ENCODE measurements at regions of chr7 and their contacts with region 1.

Region 1: GRCh38 chr7:106257752-106258151 is 27.0 kb downstream of the NAMPT start:
- DNase-seq: no peak
- H3K4me3 Mint-ChIP-seq: no peak overlapping the region
- H3K27ac Mint-ChIP-seq: peak overlapping the region; percentile 25
- H3K4me1 Mint-ChIP-seq: peaks cover 63% of the 10 kb centered on the region
- H3K27me3 Mint-ChIP-seq: no peaks in the 10 kb centered on the region

Region 2: GRCh38 chr7:106279425-106280197 is 21.9 kb after region 1 on chr7:
- intact Hi-C with region 1: loop called (anchors 2 kb)
- DNase-seq: no peak
- H3K4me3 Mint-ChIP-seq: peak overlapping the region; percentile 78
- H3K27ac Mint-ChIP-seq: peak overlapping the region; percentile 92
- H3K4me1 Mint-ChIP-seq: peaks cover 60% of the 10 kb centered on the region
- H3K27me3 Mint-ChIP-seq: no peaks in the 10 kb centered on the region

Region 3: GRCh38 chr7:106332201-106332600 is 74.4 kb after region 1 on chr7:
- intact Hi-C with region 1: no loop called
- DNase-seq: no peak
- H3K4me3 Mint-ChIP-seq: no peak overlapping the region
- H3K27ac Mint-ChIP-seq: no peak overlapping the region
- H3K4me1 Mint-ChIP-seq: peaks cover 21% of the 10 kb centered on the region
- H3K27me3 Mint-ChIP-seq: no peaks in the 10 kb centered on the region

Region 4: GRCh38 chr7:106367018-106367420 is 109.3 kb after region 1 on chr7:
- intact Hi-C with region 1: no loop called
- DNase-seq: no peak
- H3K4me3 Mint-ChIP-seq: no peak overlapping the region
- H3K27ac Mint-ChIP-seq: peak overlapping the region; percentile 38
- H3K4me1 Mint-ChIP-seq: peaks cover 26% of the 10 kb centered on the region
- H3K27me3 Mint-ChIP-seq: peaks cover 18% of the 10 kb centered on the region

Region 5: DNA sequence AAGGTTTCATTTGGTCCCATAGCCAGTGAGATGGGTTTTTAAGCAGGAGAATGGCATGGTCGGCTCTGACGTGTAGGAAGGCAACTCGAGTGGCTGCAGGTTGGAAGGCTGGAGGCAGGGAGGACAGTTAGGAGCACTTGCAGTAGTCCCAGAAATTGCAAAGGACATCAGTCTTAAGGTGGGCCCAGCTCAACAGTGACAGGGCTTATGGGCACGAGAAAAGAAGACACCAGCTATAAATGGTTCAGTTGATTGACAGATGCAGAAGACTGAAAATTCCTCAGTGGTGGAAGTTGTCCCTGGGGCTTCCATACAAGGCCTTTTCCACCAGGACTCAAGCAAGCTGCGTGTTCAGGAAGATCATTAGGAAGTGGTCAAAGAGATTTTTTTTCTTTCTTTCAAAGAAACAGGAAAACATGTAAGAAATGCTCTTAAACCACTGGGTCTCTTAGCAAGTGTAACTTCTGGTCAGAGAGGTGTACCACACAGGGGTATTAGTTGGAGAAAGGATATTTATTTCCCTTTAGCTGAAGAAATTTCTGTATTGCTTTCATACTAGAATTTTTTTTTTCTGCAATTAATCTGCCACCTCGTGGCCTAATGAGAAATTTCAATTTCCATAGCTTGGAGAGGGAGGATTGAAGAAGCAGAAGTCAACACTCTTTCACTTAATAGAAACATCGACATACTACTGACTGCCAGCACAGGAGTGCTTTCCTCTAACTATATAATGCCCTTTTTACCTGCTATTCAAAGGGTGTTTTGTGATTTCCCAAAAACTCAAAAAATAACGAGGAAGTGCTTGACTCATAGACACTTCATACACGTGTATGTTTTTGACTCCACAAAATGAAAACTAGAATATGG is 204.5 kb after region 1 on chr7:
- intact Hi-C with region 1: loop called (anchors 5 kb)
- DNase-seq: no peak
- H3K4me3 Mint-ChIP-seq: no peak overlapping the region
- H3K27ac Mint-ChIP-seq: no peak overlapping the region
- H3K4me1 Mint-ChIP-seq: peaks cover 16% of the 10 kb centered on the region
- H3K27me3 Mint-ChIP-seq: no peaks in the 10 kb centered on the region

Measured in activated T-helper 2 cell treated with anti-CD3 and anti-CD28 coated beads, Interferon-gamma antibody, Interleukin-2, Interleukin-4, amounts not matched to agents 10 μg/mL and 5 μg/mL and 100 μg/mL, durations not matched to agents 14 hours and 24 hours and 36 hours (primary cell).